CD8-positive, alpha-beta T cell (primary cell): ENCODE measurements at regions of chr3 and their contacts with region 1.

Region 1: DNA sequence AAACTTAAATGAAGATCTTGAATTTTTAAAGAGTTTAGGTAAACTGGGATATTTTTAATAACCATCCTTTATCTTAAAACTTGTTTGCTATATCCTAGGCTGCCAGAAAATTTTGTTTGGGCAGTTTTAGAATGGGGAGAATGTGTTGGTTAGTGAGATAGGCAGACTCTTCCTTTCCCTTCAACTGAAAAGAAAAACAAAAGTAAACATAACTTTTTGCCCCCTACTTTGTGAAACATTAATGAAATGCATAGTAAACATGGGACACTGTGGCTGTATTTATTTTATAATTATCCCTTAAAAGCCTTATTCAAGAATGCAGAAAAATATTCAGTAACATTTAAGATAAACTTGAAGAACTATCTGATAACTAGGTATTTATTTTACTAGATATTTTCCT is 31.0 kb downstream of the SETD5 start:
- DNase-seq: no peak
- ATAC-seq: no peak
- H3K4me3 ChIP-seq: no peak overlapping the region
- H3K4me3 Mint-ChIP-seq: no peak overlapping the region
- H3K27ac ChIP-seq: no peak overlapping the region
- H3K27ac Mint-ChIP-seq: no peak overlapping the region
- H3K4me1 ChIP-seq: no peaks in the 10 kb centered on the region
- H3K4me1 Mint-ChIP-seq: peaks cover 18% of the 10 kb centered on the region
- H3K27me3 ChIP-seq: no peaks in the 10 kb centered on the region
- H3K27me3 Mint-ChIP-seq: no peaks in the 10 kb centered on the region
- CTCF ChIP-seq: no peak

Region 2: DNA sequence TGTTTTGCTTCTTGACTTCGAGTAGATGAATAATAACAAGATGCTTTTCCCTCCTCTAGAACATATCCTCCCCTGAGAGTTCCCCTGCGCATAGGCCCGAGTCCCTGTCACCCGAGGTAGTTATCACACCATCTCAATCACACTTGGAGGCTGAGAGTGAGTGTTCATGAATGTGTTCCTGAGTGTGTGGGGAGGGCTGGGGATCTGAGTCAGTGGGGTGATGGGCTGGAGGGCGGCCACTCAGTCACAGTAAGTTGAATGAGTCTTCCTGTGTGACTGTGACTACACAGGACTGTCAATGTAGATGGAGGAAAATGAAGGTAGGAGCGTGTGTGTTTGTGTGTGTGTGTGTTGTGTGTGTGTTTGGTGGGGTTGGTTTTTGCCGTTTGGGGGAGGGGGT is 40.0 kb after region 1 on chr3:
- CTCF ChIA-PET with region 1: interaction called, 3 read pairs
- POLR2A ChIA-PET with region 1: no interaction called
- intact Hi-C with region 1: loop called in 1 of 2 experiments (anchors 5 kb)
- DNase-seq: no peak
- ATAC-seq: no peak
- H3K4me3 ChIP-seq: no peak overlapping the region
- H3K4me3 Mint-ChIP-seq: no peak overlapping the region
- H3K27ac ChIP-seq: no peak overlapping the region
- H3K27ac Mint-ChIP-seq: peak overlapping the region; percentile 34
- H3K4me1 ChIP-seq: no peaks in the 10 kb centered on the region
- H3K4me1 Mint-ChIP-seq: no peaks in the 10 kb centered on the region
- H3K27me3 ChIP-seq: no peaks in the 10 kb centered on the region
- H3K27me3 Mint-ChIP-seq: no peaks in the 10 kb centered on the region
- CTCF ChIP-seq: no peak